HepG2 (cell line): ENCODE measurements at regions of chr2 and their contacts with region 1.

Region 1: DNA sequence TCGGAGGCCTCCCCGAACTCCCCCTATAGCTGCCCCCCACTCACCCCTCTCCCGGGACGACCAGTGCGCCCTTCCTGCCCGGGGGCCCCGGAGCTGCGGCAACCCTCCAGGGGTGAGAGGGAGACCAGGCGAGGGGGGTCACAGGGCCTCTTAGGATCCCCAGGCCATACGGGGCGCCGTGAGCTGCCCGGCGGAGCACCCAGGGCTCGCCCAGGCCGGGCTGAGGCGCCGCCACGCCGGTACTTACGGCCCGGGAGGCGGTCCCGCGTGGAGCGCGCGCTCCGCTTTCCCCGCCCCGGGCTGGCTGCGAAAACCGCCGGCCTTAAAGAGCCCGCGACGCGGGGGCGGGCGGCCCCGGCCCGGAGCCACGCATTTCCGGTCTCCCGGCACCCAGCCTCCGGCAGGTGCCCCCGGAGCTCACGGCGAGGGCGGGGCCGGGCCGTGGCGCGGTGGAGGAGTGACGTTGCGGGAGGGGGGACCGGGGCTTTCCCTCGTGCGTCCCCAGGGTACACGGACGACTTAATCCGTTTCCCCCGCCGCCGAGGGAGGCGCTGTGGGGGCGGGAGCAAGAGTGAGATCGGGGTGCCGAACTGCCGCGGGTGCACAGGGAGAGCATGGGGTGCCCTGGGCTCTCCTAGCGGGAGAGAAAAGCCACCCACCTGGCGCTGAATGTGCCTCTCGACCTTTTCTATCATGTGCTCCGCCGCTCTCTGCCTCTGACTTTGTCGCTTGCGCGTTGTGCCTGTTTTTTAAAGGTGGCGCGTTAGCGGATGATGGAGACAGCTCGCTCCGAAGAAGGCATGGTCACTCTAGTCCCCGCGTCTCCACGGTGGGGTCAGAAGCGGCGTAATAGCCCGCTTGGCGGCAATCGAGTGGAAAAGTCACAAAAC is at the start of gene METTL21A:
- DNase-seq: peak; percentile 94
- ATAC-seq: peak; percentile 80
- H3K4me3 ChIP-seq: peak within 1 kb of the TSS; percentile 80 to 92 (median 89)
- H3K27ac ChIP-seq: peak within 1 kb of the TSS; percentile 87
- H3K4me1 ChIP-seq: peaks cover 66% of the 10 kb centered on the region
- H3K27me3 ChIP-seq: no peaks in the 10 kb centered on the region; a peak in 1 of 5 replicates
- CTCF ChIP-seq: peak; percentile 92
- EP300 ChIP-seq: peak in 1 of 2 experiments; percentile 68; a peak in 3 of 4 replicates
- POLR2A ChIP-seq: peak; percentile 83 to 88
- RAD21 ChIP-seq: peak; percentile 69
- total RNA-seq, gene METTL21A: 61.2 and 65.1 TPM in 2 replicates

Region 2: GRCh38 chr2:207683879-207684627 is 58.8 kb after region 1 on chr2:
- CTCF ChIA-PET with region 1: no interaction called
- POLR2A ChIA-PET with region 1: interaction called, 16 read pairs
- in situ Hi-C with region 1: no loop called
- intact Hi-C with region 1: no loop called
- DNase-seq: peak; percentile 84
- ATAC-seq: peak; percentile 91
- H3K4me3 ChIP-seq: 0 out of 6 replicates have a peak overlapping the region, but pooled peaks of 1 of the 3 experiments have one; percentile 23
- H3K27ac ChIP-seq: no peak overlapping the region
- H3K4me1 ChIP-seq: peaks cover 18% of the 10 kb centered on the region
- H3K27me3 ChIP-seq: no peaks in the 10 kb centered on the region
- CTCF ChIP-seq: no peak
- EP300 ChIP-seq: peak; percentile 34 to 44; a peak in 2 of 4 replicates
- POLR2A ChIP-seq: no peak
- RAD21 ChIP-seq: no peak

Region 3: DNA sequence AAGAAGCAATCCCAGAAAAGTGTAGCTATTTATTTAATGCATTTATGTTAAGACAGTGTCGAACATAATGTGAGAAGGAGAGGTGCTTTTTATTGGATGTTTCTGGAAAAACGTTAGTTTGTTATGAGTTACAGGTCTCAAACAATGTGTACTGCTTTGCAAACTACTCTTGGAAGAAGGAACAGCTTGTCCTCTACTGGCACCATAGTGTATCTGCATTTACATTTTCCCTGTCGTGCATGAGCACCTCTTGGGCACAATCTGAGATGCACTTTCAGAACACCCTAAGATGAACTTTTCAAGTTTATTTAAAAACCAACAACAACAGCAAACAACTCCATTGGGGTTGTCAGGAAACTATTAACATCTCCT is 109.0 kb after region 1 on chr2:
- CTCF ChIA-PET with region 1: interaction called, 9 read pairs
- POLR2A ChIA-PET with region 1: interaction called, 26 read pairs
- in situ Hi-C with region 1: loop called (anchors 10 kb)
- intact Hi-C with region 1: loop called (anchors 1 kb)
- DNase-seq: peak; percentile 75
- ATAC-seq: peak; percentile 94
- H3K4me3 ChIP-seq: peak overlapping the region; percentile 29 to 50 (median 40); a peak in 4 of 6 replicates
- H3K27ac ChIP-seq: peak overlapping the region; percentile 89
- H3K4me1 ChIP-seq: peaks cover 34% of the 10 kb centered on the region
- H3K27me3 ChIP-seq: no peaks in the 10 kb centered on the region
- CTCF ChIP-seq: peak; percentile 92
- EP300 ChIP-seq: no peak
- POLR2A ChIP-seq: no peak
- RAD21 ChIP-seq: peak; percentile 89

Region 4: GRCh38 chr2:208072250-208072892 is 447.1 kb after region 1 on chr2:
- CTCF ChIA-PET with region 1: interaction called, 6 read pairs
- POLR2A ChIA-PET with region 1: no interaction called
- in situ Hi-C with region 1: no loop called
- intact Hi-C with region 1: loop called (anchors 5 kb)
- DNase-seq: peak; percentile 63
- ATAC-seq: peak; percentile 93
- H3K4me3 ChIP-seq: no peak overlapping the region
- H3K27ac ChIP-seq: no peak overlapping the region
- H3K4me1 ChIP-seq: no peaks in the 10 kb centered on the region
- H3K27me3 ChIP-seq: peaks cover 0 to 22% of the 10 kb centered on the region in 2 experiments; a peak in 3 of 5 replicates
- CTCF ChIP-seq: peak; percentile 94
- EP300 ChIP-seq: no peak
- POLR2A ChIP-seq: no peak
- RAD21 ChIP-seq: peak; percentile 88

Region 5: DNA sequence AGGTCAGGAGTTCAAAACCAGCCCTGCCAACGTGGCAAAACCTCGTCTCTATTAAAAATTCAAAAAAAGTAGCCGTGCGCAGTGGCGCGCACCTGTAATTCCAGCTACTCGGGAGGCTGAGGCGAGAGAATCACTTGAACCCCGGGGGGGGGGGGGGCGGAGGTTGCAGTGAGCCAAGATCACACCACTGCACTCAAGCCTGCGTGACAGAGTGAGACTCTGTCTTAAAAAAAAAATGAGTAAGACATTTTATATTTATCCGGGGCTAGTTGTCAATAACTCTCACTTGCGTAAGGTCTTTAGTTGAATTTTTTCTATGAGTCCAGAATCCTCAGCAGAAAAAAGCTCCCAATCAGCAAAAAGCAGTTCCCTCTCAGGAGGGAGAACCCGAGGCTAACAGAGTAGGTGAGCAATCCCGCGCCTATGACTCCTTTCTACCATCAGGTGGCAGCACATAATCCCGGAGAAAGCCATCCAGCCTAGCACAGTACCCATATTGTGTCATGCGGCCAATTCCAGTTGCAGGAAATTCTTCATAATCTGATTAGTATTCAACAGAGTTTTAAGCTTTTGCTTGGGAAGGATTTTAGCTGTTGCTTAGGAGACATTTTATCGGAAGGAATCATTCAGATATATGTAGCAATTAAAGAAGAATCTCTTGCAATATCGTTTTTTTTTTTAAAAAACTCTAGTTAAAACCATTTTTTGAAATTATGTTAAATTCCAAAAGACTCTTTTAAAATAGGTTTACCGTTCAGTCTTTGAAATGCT is 550.0 kb after region 1 on chr2:
- CTCF ChIA-PET with region 1: no interaction called
- POLR2A ChIA-PET with region 1: no interaction called
- in situ Hi-C with region 1: no loop called
- intact Hi-C with region 1: no loop called
- DNase-seq: peak; percentile 86
- ATAC-seq: peak; percentile 97
- H3K4me3 ChIP-seq: peak overlapping the region in 1 of 3 experiments; percentile 16; a peak in 1 of 6 replicates
- H3K27ac ChIP-seq: no peak overlapping the region
- H3K4me1 ChIP-seq: peaks cover 51% of the 10 kb centered on the region
- H3K27me3 ChIP-seq: peaks cover 0 to 9% of the 10 kb centered on the region in 2 experiments; a peak in 2 of 5 replicates
- CTCF ChIP-seq: peak; percentile 92
- EP300 ChIP-seq: no peak; a peak in 1 of 4 replicates
- POLR2A ChIP-seq: no peak
- RAD21 ChIP-seq: peak; percentile 83